Right ventricle myocardium superior (tissue), 1 donor: ENCODE measurements at regions of chr17 and their contacts with region 1.

Region 1: GRCh38 chr17:4017377-4017776 is 53.1 kb upstream of the ATP2A3 start:
- DNase-seq: no peak
- ATAC-seq: no peak

Region 2: GRCh38 chr17:3818786-3819185 is 198.6 kb before region 1 on chr17:
- intact Hi-C with region 1: loop called (anchors 10 kb)
- DNase-seq: no peak
- ATAC-seq: no peak

Region 3: GRCh38 chr17:4035081-4035680 is 17.8 kb after region 1 on chr17:
- intact Hi-C with region 1: loop called (anchors 2 kb)
- DNase-seq: no peak
- ATAC-seq: no peak